WTC11 (cell line): ENCODE measurements at regions of chr12 and their contacts with region 1.

Region 1: DNA sequence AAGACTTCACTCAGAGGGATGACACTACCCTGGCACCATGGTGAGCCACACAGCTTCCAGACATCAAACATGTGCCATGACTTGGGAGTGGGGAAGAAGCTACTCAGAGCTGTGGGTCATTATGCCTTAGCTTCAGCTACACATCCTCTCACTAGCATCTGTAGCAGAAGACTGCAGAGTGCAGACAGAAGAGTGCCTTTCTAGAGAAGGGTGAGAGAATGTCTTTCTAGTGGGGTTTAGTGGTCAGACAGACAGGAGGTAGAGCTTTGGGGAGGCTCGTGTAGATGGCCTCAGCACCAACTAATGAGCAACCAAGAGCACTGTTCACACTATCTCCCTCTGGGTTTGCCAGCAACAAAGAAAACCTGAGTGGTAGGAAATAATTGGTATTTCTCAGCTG is 4.9 kb upstream of the B4GALNT3 start:
- DNase-seq: no peak
- ATAC-seq: no peak
- H3K4me3 Mint-ChIP-seq: no peak overlapping the region
- H3K27ac Mint-ChIP-seq: no peak overlapping the region
- H3K4me1 Mint-ChIP-seq: 0 out of 2 replicates have a peak, but pooled peaks cover 6% of the 10 kb centered on the region
- H3K27me3 Mint-ChIP-seq: peaks cover 39% of the 10 kb centered on the region
- CTCF ChIP-seq: no peak

Region 2: DNA sequence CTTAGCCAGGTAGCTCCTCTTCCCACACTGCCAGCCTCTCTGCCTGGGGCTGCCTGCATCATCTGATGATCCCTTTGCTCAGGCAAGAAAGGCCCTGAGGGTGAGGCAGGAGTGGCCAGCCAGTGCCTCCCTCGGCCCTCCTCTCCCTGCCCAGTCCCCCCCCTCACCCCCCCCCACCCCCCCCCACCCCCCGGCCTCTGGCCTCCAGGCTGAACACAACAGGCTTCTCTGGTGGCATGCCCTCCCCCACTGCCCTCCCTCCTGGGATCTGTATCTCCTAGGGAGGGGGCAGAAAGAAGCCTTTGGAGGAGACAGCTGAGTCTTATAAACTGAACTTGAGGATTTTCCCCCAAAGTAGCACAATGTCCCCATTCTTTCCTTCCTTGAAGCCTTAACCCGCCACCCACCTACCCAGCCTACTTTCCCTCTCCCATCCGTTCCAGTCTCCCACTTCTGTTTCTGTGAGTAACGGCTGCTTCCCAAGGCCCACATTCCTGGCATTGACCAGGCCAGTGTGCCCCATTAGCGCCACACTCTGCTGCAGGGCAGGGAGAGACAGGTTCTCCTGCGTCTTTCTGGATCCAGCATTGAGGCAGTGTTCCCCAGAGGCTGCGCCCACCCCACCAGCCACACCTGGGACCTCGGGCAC is 87.0 kb after region 1 on chr12:
- CTCF ChIA-PET with region 1: interaction called, 14 read pairs
- POLR2A ChIA-PET with region 1: no interaction called
- DNase-seq: no peak
- ATAC-seq: no peak; the same call in 1 of the 2 replicates
- H3K4me3 Mint-ChIP-seq: no peak overlapping the region
- H3K27ac Mint-ChIP-seq: no peak overlapping the region
- H3K4me1 Mint-ChIP-seq: peaks cover 16% of the 10 kb centered on the region
- H3K27me3 Mint-ChIP-seq: no peaks in the 10 kb centered on the region
- CTCF ChIP-seq: no peak